ENCODE measurements at regions of chr13 and their contacts with region 1.

Region 1: GRCh38 chr13:96020155-96020575 is 33.0 kb downstream of the UGGT2 start:
- DNase-seq: peak in 1 of 2 donors; percentile 29
- ATAC-seq: peak; percentile 49 to 90 (median 76)
- H3K4me3 ChIP-seq: no peak overlapping the region
- H3K27ac ChIP-seq: no peak overlapping the region
- H3K4me1 ChIP-seq: no peaks in the 10 kb centered on the region
- H3K27me3 ChIP-seq: no peaks in the 10 kb centered on the region
- CTCF ChIP-seq: peak; percentile 27 to 73 (median 62)

Region 2: DNA sequence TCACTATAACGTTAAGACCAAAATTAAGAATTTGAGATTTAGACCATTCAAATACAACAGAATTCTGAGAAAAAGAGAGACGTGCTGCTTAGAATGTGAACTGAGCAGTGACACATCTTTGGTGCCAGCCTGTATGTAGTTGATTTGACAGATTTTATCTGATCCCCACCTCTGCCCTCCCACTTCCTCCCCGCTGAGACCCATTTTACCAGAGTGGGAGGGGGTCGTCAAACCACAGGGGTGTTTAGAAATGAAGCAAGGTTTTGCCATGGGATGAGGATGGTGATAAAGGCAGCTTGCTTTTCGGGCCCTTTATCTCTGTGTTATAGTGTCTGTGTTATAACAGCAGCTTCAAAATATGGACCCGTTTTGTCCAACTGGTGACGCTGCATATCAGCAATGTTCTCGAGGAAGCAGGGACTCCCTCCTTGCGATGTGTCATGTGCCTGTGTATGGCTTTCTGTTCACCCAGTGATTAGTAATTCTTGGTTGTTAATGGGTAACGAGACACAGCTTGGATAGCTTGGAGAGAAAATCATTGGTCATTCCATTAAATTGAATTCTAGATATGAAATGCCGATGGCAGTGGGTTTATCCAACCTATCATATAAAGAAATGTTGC is 194.8 kb after region 1 on chr13:
- intact Hi-C with region 1: no loop called
- DNase-seq: no peak
- ATAC-seq: peak in 1 of 8 donors; percentile 48
- H3K4me3 ChIP-seq: no peak overlapping the region
- H3K27ac ChIP-seq: no peak overlapping the region
- H3K4me1 ChIP-seq: no peaks in the 10 kb centered on the region
- H3K27me3 ChIP-seq: no peaks in the 10 kb centered on the region
- CTCF ChIP-seq: no peak

Region 3: DNA sequence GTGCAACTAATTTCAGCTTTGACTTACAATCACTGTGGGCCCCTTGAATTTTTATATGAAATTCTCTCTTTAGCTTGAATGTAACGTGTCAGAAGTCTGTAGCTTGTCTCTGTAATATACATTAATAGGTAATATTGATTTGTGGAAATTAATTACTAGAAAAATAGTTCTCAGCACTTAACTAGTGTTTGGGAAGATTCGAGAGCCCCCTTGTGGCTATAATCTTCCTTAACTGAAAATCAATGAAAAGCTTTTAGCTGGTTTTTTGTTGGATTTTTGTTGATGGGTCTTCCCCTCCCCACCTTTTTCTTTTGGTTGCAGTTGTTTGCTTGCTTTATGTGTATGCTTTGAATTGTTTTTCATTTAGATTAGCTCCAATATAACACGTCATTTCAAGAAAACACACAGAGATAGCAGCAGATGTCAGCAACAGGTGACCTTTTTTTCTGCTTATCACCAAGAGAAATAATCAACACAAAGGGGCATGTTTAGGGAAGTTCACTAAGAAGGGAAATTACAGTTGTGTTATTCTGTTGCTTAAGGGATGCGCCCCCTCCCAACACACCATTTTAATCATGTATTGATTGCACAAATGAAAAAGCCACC is 797.3 kb after region 1 on chr13:
- intact Hi-C with region 1: loop called in 7 of 10 experiments (anchors 2 to 10 kb)
- DNase-seq: no peak
- ATAC-seq: no peak
- H3K4me3 ChIP-seq: no peak overlapping the region
- H3K27ac ChIP-seq: no peak overlapping the region
- H3K4me1 ChIP-seq: no peaks in the 10 kb centered on the region
- H3K27me3 ChIP-seq: no peaks in the 10 kb centered on the region
- CTCF ChIP-seq: peak in 8 of 9 donors; percentile 22 to 61 (median 47)

Region 4: GRCh38 chr13:96822895-96823294 is 802.7 kb after region 1 on chr13:
- intact Hi-C with region 1: loop called in 6 of 10 experiments (anchors 5 to 10 kb)
- DNase-seq: no peak
- ATAC-seq: peak in 1 of 8 donors; percentile 31
- H3K4me3 ChIP-seq: no peak overlapping the region
- H3K27ac ChIP-seq: no peak overlapping the region
- H3K4me1 ChIP-seq: no peaks in the 10 kb centered on the region
- H3K27me3 ChIP-seq: no peaks in the 10 kb centered on the region
- CTCF ChIP-seq: peak in 2 of 9 donors; percentile 14 to 17

Region 5: DNA sequence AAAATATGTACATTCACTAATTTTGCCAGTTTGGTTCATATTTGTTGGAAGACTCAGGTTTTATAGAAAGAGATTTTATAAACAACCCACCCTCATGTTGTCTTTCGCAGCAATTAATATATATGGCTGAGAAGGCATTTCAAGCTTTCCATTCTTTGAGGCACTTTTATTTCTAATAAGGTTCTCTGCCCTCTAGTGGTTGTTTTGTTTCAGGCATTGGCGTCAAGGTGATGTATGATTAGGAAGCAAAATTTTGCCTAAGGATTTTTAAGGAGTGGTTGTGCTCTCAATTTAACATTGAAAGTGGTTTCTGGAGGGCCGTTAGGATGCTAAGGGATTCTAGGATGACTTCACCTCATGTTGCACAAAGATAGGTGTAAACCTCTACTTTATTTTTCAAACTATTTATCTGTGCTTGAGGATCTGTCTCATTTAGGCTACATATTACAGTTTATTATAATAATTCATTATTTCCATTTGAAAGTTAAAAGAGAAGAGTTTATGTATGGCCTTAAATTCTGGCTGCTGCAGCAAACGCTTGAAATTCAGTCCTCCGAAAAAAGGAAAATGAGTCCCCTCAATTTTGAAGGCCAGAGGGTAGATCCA is 938.2 kb after region 1 on chr13:
- intact Hi-C with region 1: loop called in 8 of 10 experiments (anchors 2 to 10 kb)
- DNase-seq: no peak
- ATAC-seq: no peak
- H3K4me3 ChIP-seq: no peak overlapping the region
- H3K27ac ChIP-seq: no peak overlapping the region
- H3K4me1 ChIP-seq: no peaks in the 10 kb centered on the region
- H3K27me3 ChIP-seq: no peaks in the 10 kb centered on the region
- CTCF ChIP-seq: peak; percentile 41 to 79 (median 75)

Measured in heart right ventricle (tissue), 16 donors.